Dendritic cell treated with granulocyte-macrophage colony-stimulating factor and Interleukin-4, amounts not matched to agents 40 ng/mL and 50 ng/mL, for 4 days (primary cell): ENCODE measurements at regions of chr22 and their contacts with region 1.

Region 1: DNA sequence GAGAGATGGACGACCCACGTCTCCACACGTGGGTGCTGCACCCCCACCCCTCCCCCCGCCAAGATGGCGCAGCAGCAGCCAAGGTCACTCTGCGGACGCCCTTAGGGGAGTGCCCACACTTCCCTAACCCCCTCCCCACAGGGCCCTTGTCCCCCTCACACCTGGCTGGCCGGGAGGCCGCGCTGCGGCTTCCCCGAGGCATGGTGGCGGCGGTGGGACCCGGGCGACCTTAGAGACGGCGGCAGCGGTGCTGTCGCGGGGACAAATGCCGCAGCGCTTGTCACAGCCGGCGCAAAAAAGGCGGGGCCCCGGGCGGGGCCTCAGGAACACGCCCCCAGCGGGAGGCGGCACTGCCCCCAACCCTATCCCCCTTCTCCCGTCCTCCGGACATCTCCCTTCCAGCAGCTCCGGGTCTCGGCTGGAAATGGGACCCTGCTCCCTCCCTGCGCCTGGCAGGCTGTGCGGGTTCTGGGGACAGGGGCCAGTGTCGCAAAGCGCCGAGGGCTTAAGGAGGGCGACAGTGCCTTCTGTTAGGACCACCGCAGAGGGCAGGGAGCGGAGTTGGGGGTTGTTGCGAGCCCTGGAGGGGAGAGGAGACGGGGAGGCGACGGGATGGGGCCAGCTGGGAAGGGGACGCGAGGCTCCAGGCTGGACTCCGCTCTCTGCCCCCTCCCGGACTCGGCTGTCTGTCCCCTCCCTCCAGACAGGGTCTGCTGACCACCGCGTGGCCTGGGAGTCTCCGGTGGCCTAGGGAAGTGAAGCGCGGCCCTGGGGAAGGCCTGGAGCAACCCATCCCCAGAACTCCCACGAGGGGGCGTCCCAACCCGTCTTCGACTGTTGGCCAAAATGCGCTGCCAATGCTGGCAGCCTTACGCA is at the start of gene CHCHD10:
- H3K4me3 Mint-ChIP-seq: peak within 1 kb of the TSS; percentile 92
- H3K27ac Mint-ChIP-seq: peak within 1 kb of the TSS; percentile 97
- H3K4me1 Mint-ChIP-seq: peaks cover 57% of the 10 kb centered on the region
- H3K27me3 Mint-ChIP-seq: peaks cover 11% of the 10 kb centered on the region

Region 2: DNA sequence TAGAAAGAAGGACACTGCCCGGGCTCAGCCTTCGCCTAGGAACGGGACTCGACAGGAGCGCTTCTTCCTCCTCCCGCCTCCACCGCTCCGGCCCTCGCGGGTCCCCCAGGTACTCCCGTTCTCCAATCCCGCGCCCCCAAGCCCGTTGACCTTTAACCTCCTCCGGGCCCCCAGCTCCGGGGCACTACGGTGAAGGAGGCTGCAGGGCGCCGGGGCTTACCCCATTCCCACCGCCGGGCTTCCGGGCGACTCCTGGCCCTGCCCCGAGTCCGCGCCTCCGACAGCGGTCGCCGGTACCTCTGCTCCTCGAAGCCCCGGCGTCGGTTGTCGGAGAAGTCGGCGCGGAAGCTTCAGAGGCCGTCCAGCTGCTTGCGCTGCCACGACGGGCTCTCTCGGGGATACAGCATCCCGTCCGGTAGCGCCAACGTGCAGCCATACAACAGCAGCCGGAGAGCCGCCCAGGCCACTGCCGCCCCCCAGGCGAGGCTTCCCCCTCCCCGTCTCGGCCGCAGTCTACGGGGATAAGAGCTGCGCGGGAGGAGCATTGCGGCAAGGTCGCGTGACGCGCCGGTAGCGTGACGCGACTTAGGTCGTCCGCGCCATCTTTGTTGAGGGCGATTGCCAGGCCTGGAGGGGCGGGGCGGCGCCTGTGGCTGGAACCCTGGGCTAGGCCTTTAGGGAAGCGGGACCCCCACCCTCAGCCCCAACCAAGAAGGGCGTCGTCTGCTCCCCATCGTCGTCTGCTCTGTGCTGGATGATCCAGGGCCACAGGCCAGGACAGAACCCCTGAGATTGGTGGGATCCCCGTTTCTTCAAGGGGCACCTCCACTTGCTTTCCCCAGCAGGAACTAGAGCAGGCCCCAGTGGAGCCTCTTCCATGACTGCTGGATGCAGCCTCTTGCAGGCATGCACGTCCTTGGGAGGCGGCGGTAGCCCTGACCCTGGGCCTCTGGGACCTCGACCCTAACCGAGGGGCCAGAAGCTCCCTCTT is 50.8 kb before region 1 on chr22:
- intact Hi-C with region 1: loop called (anchors 5 kb)
- H3K4me3 Mint-ChIP-seq: peak overlapping the region; percentile 82
- H3K27ac Mint-ChIP-seq: peak overlapping the region; percentile 86
- H3K4me1 Mint-ChIP-seq: peaks cover 25% of the 10 kb centered on the region
- H3K27me3 Mint-ChIP-seq: no peaks in the 10 kb centered on the region

Region 3: DNA sequence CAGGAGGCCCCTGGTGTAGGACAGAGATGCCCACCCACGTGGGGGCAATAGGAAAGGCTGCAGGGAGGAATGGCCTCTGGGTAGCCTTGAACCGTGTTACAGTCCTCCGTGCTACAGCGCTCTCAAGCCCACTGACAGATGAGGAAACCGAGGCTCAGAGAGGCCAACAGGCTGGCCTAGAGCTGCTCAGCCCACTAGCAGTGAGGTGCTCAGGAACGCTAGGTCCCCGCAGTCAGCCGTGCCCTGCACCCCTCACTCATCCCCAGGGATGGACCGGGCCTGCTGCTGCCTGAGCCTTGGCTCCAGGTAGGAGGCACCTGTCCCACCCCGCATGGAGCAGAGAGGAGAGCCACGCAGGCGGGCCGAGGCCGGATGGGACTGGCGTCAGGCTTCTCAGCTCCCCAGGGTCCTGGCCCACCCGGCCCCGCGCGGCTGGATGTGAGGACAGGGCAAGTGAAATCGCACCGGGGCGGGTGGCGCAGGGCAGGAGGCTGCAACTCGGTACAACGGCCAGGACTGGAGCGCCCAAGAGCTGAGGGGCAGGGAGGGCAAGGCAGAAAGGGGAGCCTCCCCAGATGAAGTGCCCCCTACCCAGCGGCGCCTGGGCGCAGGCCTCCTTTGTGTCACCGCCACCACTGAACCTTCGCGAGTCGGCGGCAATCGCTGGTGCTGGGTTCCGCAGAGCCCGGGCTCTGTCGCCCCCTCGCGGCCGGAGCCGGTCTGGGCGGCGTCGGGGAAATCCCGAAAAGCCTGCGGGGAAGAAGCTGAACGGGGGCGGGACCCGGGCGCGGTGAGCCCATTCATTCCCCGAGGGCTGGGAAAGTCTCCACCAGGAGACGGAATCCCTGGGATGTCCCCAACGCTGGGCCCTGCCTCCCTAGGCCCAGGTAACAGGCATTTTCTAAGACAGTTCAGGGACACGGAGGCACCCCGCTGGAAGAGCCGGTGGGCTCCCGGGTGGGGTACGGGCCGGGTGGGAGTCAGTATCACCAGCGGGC is 81.4 kb after region 1 on chr22:
- intact Hi-C with region 1: loop called (anchors 5 kb)
- H3K4me3 Mint-ChIP-seq: no peak overlapping the region
- H3K27ac Mint-ChIP-seq: no peak overlapping the region
- H3K4me1 Mint-ChIP-seq: peaks cover 22% of the 10 kb centered on the region
- H3K27me3 Mint-ChIP-seq: peaks cover 31% of the 10 kb centered on the region